SK-N-SH (cell line): ENCODE measurements at regions of chr13 and their contacts with region 1.

Region 1: DNA sequence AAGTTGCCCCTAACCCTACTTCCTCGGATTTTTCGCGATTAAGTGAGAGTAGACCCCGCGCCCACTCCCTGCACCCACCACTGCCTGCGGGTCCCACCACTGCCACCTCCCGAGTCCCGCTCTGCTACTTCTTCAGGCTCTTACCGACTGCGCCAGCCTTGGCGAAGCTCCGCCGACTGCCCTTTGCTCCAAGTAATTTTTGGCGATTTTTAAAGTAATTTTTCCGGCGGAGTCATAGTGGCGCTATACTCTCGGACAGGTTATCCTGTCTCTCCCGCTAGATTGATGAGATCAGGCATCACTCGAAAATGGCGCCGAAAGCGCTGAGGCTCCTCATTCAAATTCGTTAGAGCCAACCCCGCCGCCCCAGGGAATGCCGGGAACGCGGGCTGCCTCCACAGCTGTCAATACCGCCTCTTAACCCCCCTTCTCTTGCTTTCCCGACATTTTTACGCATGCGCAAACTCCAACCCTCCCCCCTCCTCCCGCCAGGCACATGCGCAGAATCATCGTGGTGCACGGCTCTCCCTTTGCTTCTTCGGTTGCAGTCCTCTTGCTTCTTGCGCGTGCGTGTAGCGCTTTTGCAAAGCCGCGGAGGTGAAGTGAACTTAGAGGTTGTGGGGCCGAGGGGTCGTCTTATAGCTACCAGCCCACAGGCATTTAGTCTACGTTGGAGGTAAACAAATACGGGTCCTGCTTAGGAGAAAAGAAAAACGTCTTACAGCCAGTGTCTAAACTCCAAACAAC is 66.6 kb downstream of the KCNRG start:
- DNase-seq: peak; percentile 94
- H3K4me3 ChIP-seq: peak overlapping the region; percentile 93 to 95
- H3K27ac ChIP-seq: peak overlapping the region; percentile 85 to 90
- H3K4me1 ChIP-seq: peaks cover 5 to 7% of the 10 kb centered on the region in 2 experiments; a peak in 3 of 4 replicates
- H3K27me3 ChIP-seq: no peaks in the 10 kb centered on the region
- CTCF ChIP-seq: peak; percentile 46
- EP300 ChIP-seq: no peak
- RAD21 ChIP-seq: no peak

Region 2: DNA sequence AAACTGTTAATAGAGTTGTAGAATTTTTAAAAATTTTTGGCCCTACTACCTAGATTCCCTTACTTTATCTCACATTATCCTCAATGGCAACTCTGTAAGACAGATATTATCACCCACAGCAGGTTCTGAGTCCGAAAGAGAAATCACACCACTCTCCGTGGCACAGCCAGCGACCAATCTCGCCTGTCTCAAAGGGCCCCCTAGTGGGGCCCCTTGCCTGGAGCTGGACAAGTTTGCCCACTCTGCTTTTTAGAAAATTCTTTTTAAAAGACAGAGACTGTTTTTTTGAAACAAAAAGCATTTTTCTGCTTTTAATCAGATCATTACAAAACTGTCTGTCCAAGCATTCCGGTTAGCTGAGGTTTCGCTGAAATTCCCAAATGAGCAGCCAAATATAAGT is 564.4 kb before region 1 on chr13:
- CTCF ChIA-PET with region 1: no interaction called
- POLR2A ChIA-PET with region 1: no interaction called
- DNase-seq: no peak
- H3K4me3 ChIP-seq: no peak overlapping the region
- H3K27ac ChIP-seq: no peak overlapping the region
- H3K4me1 ChIP-seq: no peaks in the 10 kb centered on the region
- H3K27me3 ChIP-seq: no peaks in the 10 kb centered on the region
- CTCF ChIP-seq: peak; percentile 47
- EP300 ChIP-seq: no peak
- RAD21 ChIP-seq: peak; percentile 16; the same call in 1 of the 2 replicates

Region 3: GRCh38 chr13:49996951-49997895 is 84.6 kb before region 1 on chr13 and contains the start of gene TRIM13:
- CTCF ChIA-PET with region 1: interaction called, 33 read pairs
- POLR2A ChIA-PET with region 1: interaction called, 14 read pairs
- DNase-seq: peak; percentile 72
- H3K4me3 ChIP-seq: peak within 1 kb of the TSS; percentile 71 to 94
- H3K27ac ChIP-seq: peak within 1 kb of the TSS; percentile 97 to 98
- H3K4me1 ChIP-seq: peaks cover 19 to 29% of the 10 kb centered on the region in 2 experiments; a peak in 3 of 4 replicates
- H3K27me3 ChIP-seq: no peaks in the 10 kb centered on the region
- CTCF ChIP-seq: peak; percentile 86
- EP300 ChIP-seq: no peak
- RAD21 ChIP-seq: peak; percentile 68
- polyA plus RNA-seq, gene TRIM13: 8.3 and 12.9 TPM in 2 replicates

Region 4: DNA sequence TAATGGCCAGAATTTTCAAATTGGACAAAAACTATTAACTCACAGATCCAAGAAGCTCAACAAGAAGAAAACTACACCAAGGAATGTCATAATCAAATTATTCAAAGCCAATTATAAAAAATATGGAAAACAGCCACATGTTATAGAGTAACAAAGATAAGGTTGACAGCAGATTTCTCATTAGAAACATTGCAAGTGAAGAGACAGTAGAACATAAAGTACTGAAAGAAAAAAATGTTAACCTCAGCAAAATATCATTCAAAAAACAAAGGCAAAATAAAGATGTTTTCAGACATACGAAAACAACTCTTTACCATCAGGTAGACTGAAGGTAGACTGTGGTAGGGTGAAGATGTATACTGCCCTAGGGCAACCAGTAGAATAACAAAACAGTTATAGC is 16.8 kb after region 1 on chr13:
- CTCF ChIA-PET with region 1: interaction called, 17 read pairs
- POLR2A ChIA-PET with region 1: no interaction called
- DNase-seq: no peak
- H3K4me3 ChIP-seq: no peak overlapping the region
- H3K27ac ChIP-seq: no peak overlapping the region
- H3K4me1 ChIP-seq: no peaks in the 10 kb centered on the region
- H3K27me3 ChIP-seq: no peaks in the 10 kb centered on the region
- CTCF ChIP-seq: no peak
- EP300 ChIP-seq: no peak
- RAD21 ChIP-seq: no peak

Region 5: GRCh38 chr13:50123862-50124536 is 42.1 kb after region 1 on chr13:
- CTCF ChIA-PET with region 1: interaction called, 18 read pairs
- POLR2A ChIA-PET with region 1: interaction called, 14 read pairs
- DNase-seq: no peak
- H3K4me3 ChIP-seq: peak overlapping the region; percentile 81 to 90
- H3K27ac ChIP-seq: peak overlapping the region; percentile 96
- H3K4me1 ChIP-seq: peaks cover 11 to 14% of the 10 kb centered on the region in 2 experiments; a peak in 3 of 4 replicates
- H3K27me3 ChIP-seq: no peaks in the 10 kb centered on the region
- CTCF ChIP-seq: no peak
- EP300 ChIP-seq: no peak; a peak in 1 of 4 replicates
- RAD21 ChIP-seq: no peak

Region 6: DNA sequence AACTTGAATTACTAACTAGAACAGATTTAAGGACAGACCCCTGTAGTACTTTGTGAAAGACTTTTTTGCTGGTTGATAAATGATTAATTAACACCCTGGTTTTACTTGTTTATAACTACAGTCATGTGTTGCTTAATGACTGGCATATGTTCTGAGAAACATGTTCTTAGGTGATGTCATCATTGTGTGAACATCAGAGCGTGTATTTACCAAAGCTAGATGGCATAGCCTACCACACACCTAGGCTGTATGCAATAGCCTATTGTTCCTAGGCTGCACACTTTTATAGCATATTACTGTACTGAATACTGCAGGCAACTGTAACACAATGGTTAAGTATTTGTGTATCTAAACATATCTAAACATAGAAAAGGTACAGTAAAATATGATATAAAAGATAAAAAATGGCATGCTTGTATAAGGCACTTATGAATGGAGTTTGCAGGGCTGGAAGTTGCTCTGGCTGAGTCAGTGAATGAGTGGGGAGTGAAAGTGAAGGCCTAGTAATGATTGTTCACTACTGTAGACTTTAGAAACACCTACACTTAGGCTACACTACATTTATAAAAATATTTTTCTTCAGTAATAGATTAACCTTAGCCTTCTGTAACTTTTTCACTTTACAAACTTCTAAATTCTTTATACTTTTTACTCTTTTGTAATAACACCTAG is 193.7 kb after region 1 on chr13:
- CTCF ChIA-PET with region 1: no interaction called
- POLR2A ChIA-PET with region 1: no interaction called
- DNase-seq: no peak
- H3K4me3 ChIP-seq: no peak overlapping the region
- H3K27ac ChIP-seq: no peak overlapping the region
- H3K4me1 ChIP-seq: no peaks in the 10 kb centered on the region
- H3K27me3 ChIP-seq: no peaks in the 10 kb centered on the region
- CTCF ChIP-seq: no peak
- EP300 ChIP-seq: no peak
- RAD21 ChIP-seq: no peak

Region 7: GRCh38 chr13:50801087-50801931 is 719.5 kb after region 1 on chr13:
- CTCF ChIA-PET with region 1: interaction called, 16 read pairs
- POLR2A ChIA-PET with region 1: no interaction called
- DNase-seq: peak; percentile 53
- H3K4me3 ChIP-seq: no peak overlapping the region
- H3K27ac ChIP-seq: no peak overlapping the region
- H3K4me1 ChIP-seq: peaks cover 0 to 7% of the 10 kb centered on the region in 2 experiments; a peak in 2 of 4 replicates
- H3K27me3 ChIP-seq: no peaks in the 10 kb centered on the region
- CTCF ChIP-seq: peak; percentile 79
- EP300 ChIP-seq: no peak
- RAD21 ChIP-seq: peak; percentile 95